ENCODE measurements at regions of chr15 and their contacts with region 1.

Region 1: DNA sequence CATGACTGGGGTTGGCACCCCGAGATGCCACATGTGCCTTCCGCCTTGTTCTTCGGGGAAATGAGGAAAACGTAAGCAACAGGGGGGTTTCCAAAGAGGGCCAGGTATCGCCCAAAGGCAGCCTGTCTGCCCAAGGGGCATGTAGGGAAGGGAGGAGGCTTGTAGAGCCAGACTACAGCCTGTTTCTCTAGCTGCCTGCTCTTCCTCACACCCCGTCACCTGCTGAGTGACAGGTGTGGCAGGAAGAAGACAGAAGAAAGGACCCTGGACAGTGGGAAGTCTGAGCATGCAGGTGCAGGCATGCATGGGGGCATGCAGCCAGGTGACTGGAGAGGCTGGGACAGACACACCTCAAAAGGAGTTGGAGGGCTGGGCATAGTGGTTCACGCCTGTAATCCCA is 9.8 kb downstream of the PLA2G4E start:
- DNase-seq: no peak
- H3K4me3 ChIP-seq: no peak overlapping the region
- H3K27ac ChIP-seq: no peak overlapping the region
- H3K4me1 ChIP-seq: no peaks in the 10 kb centered on the region
- H3K27me3 ChIP-seq: peaks cover 9 to 11% of the 10 kb centered on the region in 2 experiments
- CTCF ChIP-seq: no peak
- POLR2A ChIP-seq: no peak

Region 2: DNA sequence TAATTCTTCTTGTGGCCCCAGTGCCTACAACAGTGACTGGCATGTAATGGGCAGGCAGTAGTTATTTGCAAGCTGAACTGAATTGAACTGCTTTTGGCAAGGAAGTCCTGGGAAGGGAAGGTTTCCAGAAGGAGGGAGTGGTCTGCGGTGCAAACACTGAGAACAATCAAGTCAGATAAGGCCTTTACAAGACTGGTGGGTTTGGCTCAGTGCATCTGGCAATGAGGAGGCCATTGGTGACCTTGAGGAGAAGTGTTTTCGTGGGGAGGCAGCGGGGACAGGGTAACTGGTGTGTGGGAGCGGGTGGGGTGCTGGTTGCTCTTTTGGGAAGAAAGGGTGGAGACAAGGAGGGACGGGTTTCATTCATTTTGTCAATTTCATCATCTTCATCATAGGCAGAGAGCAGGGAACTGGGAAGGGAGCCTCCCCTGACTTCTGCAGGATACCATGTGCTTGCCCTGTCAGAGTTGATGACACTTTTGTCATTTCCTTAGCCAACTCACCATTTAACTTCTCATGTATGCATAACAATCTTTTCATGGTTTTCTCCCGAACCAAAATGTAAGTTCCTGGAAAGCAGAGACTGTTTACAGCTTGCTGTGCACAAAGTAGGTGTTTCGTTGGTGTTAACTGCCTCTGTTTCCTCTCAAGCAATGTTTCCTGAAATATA is 30.3 kb before region 1 on chr15:
- CTCF ChIA-PET with region 1: no interaction called
- POLR2A ChIA-PET with region 1: no interaction called
- dilution Hi-C with region 1: no loop called
- intact Hi-C with region 1: no loop called
- DNase-seq: peak; percentile 72
- H3K4me3 ChIP-seq: no peak overlapping the region
- H3K27ac ChIP-seq: no peak overlapping the region
- H3K4me1 ChIP-seq: no peaks in the 10 kb centered on the region
- H3K27me3 ChIP-seq: no peaks in the 10 kb centered on the region
- CTCF ChIP-seq: no peak
- POLR2A ChIP-seq: no peak

Region 3: DNA sequence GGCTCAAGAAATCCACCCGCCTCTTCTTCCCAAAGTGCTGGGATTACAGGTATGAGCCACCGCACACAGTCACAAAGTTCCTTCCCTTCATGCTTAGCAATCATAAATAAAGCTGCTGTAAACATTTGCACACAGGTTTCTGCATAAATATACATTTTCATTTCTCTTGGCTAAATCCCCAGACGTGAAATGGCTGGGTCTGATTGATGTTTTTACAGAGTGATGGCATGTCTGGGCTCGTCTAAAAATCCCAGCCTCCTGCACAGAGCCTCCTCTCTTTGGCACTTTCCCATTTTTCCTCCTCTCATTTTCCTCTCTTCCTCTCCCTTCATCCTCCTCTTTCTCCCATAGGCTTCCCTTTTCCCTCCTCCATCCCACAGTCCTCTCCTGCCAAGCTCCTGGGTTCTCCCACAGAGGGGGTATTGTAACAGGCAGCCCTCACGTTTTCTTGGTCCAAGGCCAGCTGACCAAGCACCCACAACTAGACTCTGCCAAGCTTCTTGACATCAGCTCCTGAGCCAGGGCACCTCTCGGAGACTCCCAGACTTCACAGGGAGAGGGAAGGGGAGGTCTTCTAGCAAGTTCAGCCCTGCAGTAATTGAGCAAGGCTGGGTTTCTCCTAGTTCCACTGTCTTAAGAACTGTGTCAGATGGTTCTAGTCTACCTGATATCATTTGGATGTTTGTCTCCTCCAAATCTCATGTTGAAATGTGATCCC is 20.3 kb after region 1 on chr15:
- CTCF ChIA-PET with region 1: no interaction called
- POLR2A ChIA-PET with region 1: no interaction called
- dilution Hi-C with region 1: no loop called
- intact Hi-C with region 1: loop called (anchors 1 kb)
- DNase-seq: no peak
- H3K4me3 ChIP-seq: no peak overlapping the region
- H3K27ac ChIP-seq: no peak overlapping the region
- H3K4me1 ChIP-seq: peaks cover 2% of the 10 kb centered on the region
- H3K27me3 ChIP-seq: peaks cover 15 to 28% of the 10 kb centered on the region in 2 experiments
- CTCF ChIP-seq: no peak
- POLR2A ChIP-seq: no peak